Naive thymus-derived CD4-positive, alpha-beta T cell (primary cell): ENCODE measurements at regions of chr7 and their contacts with region 1.

Region 1: DNA sequence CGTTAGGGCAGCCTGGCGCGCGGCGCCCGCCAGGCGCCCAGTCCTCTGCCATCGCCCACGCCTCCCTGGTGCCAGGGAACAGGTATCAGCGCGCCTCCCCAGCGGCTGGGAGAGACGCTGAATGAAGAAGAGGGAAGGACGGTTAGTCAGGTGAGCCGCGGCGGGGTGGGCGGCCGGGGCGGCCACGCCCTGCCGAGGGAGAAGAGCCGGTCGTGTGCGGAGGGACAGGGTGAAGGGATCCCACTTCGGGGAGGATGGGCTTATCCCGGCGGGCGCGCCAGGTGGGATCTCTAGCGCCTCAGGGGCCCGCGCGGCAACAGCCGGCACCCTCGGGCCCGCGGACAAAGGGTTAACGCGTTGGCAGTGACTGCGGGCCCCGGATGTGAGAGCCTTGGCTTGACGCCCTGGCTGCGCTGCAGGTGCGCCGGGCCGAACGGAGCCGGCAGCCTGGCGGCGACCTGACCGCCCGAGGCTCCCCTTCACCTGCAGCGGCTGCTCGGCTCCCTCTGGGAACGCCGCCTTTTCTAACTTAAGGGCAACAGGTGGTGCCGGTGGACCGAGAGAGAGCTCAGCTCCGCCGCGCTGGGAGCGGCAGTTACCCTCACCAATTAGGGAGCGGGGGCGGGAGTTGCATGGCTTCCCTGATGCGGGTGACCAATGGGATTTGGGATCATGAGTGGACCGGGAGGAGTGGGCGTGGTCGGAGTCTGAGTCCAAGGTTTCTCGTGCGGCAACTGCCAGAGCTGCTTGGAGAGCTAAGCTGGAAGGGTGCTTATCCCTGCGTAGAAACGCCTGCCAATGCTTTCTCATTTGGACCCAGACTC is at the start of gene ARL4A:
- DNase-seq: peak; percentile 70 to 87 (median 85)
- ATAC-seq: peak; percentile 60
- H3K4me3 ChIP-seq: peak within 1 kb of the TSS; percentile 76
- H3K4me3 Mint-ChIP-seq: peak within 1 kb of the TSS; percentile 94 to 100 (median 96)
- H3K27ac ChIP-seq: peak within 1 kb of the TSS; percentile 95
- H3K27ac Mint-ChIP-seq: peak within 1 kb of the TSS; percentile 83 to 98 (median 96)
- H3K4me1 ChIP-seq: peaks cover 5 to 14% of the 10 kb centered on the region in 2 donors
- H3K4me1 Mint-ChIP-seq: peaks cover 7 to 35% (median 25%) of the 10 kb centered on the region in 7 donors
- H3K27me3 ChIP-seq: no peaks in the 10 kb centered on the region
- H3K27me3 Mint-ChIP-seq: no peaks in the 10 kb centered on the region
- total RNA-seq, gene ARL4A: 5.5 to 97.4 (median 11.6) TPM

Region 2: DNA sequence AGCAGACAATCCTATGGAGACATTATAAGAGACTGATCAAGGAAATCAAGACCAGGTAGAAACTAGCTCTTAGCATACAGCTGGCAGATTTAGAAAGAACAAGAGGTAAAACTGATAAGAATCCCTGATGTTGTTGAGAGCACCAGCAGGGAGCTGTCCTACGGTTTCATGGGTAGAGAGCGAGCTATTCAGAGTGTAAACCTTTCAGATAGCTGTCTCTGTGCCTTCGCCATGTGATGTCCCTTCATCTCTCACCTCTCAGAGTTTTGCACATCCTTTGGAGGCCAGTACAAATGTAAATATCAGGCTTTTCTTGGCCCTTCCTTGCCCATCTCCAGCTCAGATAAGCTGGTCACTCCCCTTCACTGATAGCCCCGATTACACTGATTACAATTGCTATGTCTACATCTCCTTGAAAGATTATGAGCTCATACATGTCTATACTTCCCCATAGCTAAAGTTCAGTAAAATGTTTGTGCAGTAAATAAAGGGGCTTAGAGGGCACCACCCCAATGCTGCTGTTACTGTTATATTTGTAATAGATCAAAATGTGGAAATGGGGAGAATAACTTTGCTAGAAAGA is 877.0 kb before region 1 on chr7:
- CTCF ChIA-PET with region 1: no interaction called
- POLR2A ChIA-PET with region 1: no interaction called
- intact Hi-C with region 1: no loop called
- DNase-seq: no peak
- ATAC-seq: peak; percentile 26
- H3K4me3 ChIP-seq: no peak overlapping the region
- H3K4me3 Mint-ChIP-seq: no peak overlapping the region
- H3K27ac ChIP-seq: no peak overlapping the region
- H3K27ac Mint-ChIP-seq: no peak overlapping the region
- H3K4me1 ChIP-seq: no peaks in the 10 kb centered on the region
- H3K4me1 Mint-ChIP-seq: no peaks in the 10 kb centered on the region
- H3K27me3 ChIP-seq: no peaks in the 10 kb centered on the region
- H3K27me3 Mint-ChIP-seq: no peaks in the 10 kb centered on the region

Region 3: GRCh38 chr7:12257582-12257981 is 429.5 kb before region 1 on chr7:
- CTCF ChIA-PET with region 1: no interaction called
- POLR2A ChIA-PET with region 1: no interaction called
- intact Hi-C with region 1: loop called in 1 of 2 experiments (anchors 1 kb)
- DNase-seq: peak in 8 of 9 donors; percentile 31 to 80 (median 72)
- ATAC-seq: peak; percentile 97
- H3K4me3 ChIP-seq: peak overlapping the region; percentile 26
- H3K4me3 Mint-ChIP-seq: no peak overlapping the region
- H3K27ac ChIP-seq: peak overlapping the region; percentile 28
- H3K27ac Mint-ChIP-seq: no peak overlapping the region
- H3K4me1 ChIP-seq: peaks cover 23% of the 10 kb centered on the region in 2 donors
- H3K4me1 Mint-ChIP-seq: peaks cover 0 to 12% (median 9%) of the 10 kb centered on the region in 7 donors
- H3K27me3 ChIP-seq: no peaks in the 10 kb centered on the region
- H3K27me3 Mint-ChIP-seq: peaks cover 0 to 3% (median 0%) of the 10 kb centered on the region in 5 donors

Region 4: DNA sequence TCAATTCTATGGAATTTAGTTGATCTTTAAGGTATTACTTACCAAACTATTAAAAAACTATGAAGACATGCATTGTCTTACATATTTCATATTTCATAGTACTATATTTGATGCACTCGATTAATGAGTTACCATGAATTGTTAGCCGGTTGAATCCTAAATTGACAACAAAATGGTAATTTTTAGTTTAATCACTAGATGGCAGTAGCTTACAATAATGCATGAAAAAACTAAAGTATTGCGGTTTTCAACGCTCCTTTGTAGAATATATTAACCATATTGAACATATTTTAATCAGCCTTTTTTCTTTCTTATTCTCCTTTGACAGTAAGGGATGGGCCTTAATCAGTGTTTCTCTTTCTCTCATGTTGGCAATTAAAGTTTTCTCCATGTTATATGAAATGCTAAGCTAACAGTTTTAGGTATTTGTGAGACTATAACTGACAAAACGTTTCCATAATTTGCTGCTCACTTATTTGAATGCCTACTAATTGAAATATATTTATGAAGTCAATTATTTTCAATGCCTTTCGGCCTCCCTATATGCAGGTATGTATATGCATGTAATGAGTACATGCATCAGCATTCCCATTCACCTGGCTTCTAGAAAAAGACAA is 48.1 kb before region 1 on chr7:
- CTCF ChIA-PET with region 1: interaction called, 8 read pairs
- POLR2A ChIA-PET with region 1: interaction called, 3 read pairs
- intact Hi-C with region 1: loop called (anchors 1 kb)
- DNase-seq: peak in 6 of 9 donors; percentile 26 to 62 (median 54)
- ATAC-seq: peak; percentile 71
- H3K4me3 ChIP-seq: no peak overlapping the region
- H3K4me3 Mint-ChIP-seq: peak overlapping the region in 1 of 10 donors; percentile 50
- H3K27ac ChIP-seq: no peak overlapping the region
- H3K27ac Mint-ChIP-seq: no peak overlapping the region
- H3K4me1 ChIP-seq: peaks cover 0 to 7% of the 10 kb centered on the region in 2 donors
- H3K4me1 Mint-ChIP-seq: peaks cover 11 to 31% (median 23%) of the 10 kb centered on the region in 7 donors
- H3K27me3 ChIP-seq: no peaks in the 10 kb centered on the region
- H3K27me3 Mint-ChIP-seq: peaks cover 0 to 10% (median 0%) of the 10 kb centered on the region in 5 donors

Region 5: DNA sequence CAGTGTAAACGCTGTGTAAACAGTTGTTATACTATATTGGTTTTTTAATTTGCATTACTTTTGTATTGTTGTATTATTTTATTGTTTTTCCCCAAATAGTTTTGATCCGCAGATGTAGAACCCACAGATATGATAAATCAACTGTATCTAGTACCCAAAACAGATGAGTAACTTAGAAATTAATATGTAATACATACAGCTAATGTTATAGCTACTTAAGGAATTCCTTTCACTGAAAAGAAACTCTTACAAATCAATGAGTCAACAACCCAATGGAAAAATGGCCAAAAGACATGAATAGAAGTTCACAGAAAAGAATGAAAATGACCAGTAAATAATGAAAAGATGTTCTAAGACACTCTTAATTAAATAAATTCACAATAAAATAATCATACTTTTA is 31.9 kb before region 1 on chr7:
- CTCF ChIA-PET with region 1: no interaction called
- POLR2A ChIA-PET with region 1: no interaction called
- intact Hi-C with region 1: no loop called
- DNase-seq: no peak
- ATAC-seq: no peak
- H3K4me3 ChIP-seq: no peak overlapping the region
- H3K4me3 Mint-ChIP-seq: no peak overlapping the region
- H3K27ac ChIP-seq: no peak overlapping the region
- H3K27ac Mint-ChIP-seq: no peak overlapping the region
- H3K4me1 ChIP-seq: no peaks in the 10 kb centered on the region
- H3K4me1 Mint-ChIP-seq: no peaks in the 10 kb centered on the region
- H3K27me3 ChIP-seq: no peaks in the 10 kb centered on the region
- H3K27me3 Mint-ChIP-seq: peaks cover 0 to 4% (median 0%) of the 10 kb centered on the region in 5 donors

Region 6: DNA sequence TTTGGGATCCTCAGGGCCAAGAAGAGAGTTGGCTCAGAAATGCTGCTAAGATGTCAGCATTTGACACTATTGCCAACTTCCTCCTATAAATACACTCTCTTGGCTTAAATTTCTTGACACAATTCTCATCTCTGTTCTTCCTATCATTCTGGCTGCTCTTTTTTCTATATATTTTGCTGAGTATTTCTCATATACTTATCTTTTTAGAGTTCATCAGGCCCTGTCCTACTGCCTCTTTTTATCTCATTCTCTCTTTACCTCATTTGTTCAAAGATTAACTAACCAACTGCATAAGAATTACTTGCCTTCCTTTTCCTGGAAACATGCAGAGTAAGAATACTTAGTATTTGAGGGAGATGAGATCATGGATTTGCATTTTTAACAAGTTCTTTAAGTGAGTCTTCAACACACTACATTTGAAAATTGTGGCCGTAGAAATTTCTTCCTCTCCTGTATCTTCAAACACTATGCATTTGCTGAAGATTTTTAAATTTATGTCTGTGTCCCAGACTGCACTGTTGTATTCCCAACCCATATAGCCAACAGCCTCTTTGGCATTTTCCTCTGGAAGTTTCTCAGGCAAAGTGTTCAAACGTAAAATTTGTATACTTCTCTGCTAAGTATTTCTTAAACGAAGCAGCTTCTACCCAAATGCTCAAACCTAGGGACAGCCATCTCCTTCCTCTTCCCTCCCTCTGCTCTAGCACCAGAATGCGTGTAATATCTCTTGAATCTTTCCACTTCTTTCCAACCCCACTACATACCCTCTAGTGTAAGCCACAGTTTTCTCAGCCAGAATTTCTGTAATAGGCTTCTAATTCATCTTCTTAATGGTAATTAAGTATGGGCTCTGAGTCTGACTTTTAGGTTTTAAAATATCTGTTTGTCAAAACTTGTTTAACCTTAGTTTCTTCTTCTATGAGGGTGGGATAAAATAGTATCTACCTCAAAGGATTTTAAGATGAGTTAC is 35.8 kb after region 1 on chr7:
- CTCF ChIA-PET with region 1: interaction called, 4 read pairs
- POLR2A ChIA-PET with region 1: no interaction called
- intact Hi-C with region 1: loop called in 1 of 2 experiments (anchors 2 kb)
- DNase-seq: no peak
- ATAC-seq: no peak
- H3K4me3 ChIP-seq: no peak overlapping the region
- H3K4me3 Mint-ChIP-seq: peak overlapping the region in 1 of 10 donors; percentile 51
- H3K27ac ChIP-seq: no peak overlapping the region
- H3K27ac Mint-ChIP-seq: peak overlapping the region in 2 of 9 donors; percentile 42 to 90
- H3K4me1 ChIP-seq: no peaks in the 10 kb centered on the region
- H3K4me1 Mint-ChIP-seq: peaks cover 0 to 39% (median 4%) of the 10 kb centered on the region in 7 donors
- H3K27me3 ChIP-seq: no peaks in the 10 kb centered on the region
- H3K27me3 Mint-ChIP-seq: peaks cover 0 to 2% (median 0%) of the 10 kb centered on the region in 5 donors

Region 7: DNA sequence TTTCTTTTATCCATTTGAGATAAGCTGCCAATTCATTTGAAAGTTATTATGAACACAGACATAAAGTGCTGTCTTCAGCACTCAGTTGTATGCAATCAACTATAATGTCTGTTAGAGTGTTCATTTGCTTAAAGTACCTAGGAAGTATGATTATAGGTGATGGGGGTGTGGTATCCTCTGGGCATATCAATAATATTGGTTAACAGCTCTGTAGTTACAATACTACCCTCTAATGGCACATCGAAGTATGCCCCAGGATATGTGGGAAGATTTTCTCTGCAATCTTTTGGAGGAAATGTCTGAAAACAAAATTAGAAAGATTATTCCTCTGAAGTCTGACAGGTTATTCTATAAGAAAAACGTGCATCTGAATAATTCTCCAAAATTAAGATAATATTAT is 430.0 kb after region 1 on chr7:
- CTCF ChIA-PET with region 1: no interaction called
- POLR2A ChIA-PET with region 1: no interaction called
- intact Hi-C with region 1: loop called (anchors 2 to 5 kb)
- DNase-seq: no peak
- ATAC-seq: no peak
- H3K4me3 ChIP-seq: no peak overlapping the region
- H3K4me3 Mint-ChIP-seq: no peak overlapping the region
- H3K27ac ChIP-seq: no peak overlapping the region
- H3K27ac Mint-ChIP-seq: no peak overlapping the region
- H3K4me1 ChIP-seq: no peaks in the 10 kb centered on the region
- H3K4me1 Mint-ChIP-seq: no peaks in the 10 kb centered on the region
- H3K27me3 ChIP-seq: no peaks in the 10 kb centered on the region
- H3K27me3 Mint-ChIP-seq: peaks cover 0 to 5% (median 3%) of the 10 kb centered on the region in 5 donors

Region 8: GRCh38 chr7:13742811-13743210 is 1055.7 kb after region 1 on chr7:
- CTCF ChIA-PET with region 1: no interaction called
- POLR2A ChIA-PET with region 1: no interaction called
- intact Hi-C with region 1: loop called in 1 of 2 experiments (anchors 5 kb)
- DNase-seq: no peak
- ATAC-seq: no peak
- H3K4me3 ChIP-seq: no peak overlapping the region
- H3K4me3 Mint-ChIP-seq: no peak overlapping the region
- H3K27ac ChIP-seq: no peak overlapping the region
- H3K27ac Mint-ChIP-seq: no peak overlapping the region
- H3K4me1 ChIP-seq: no peaks in the 10 kb centered on the region
- H3K4me1 Mint-ChIP-seq: no peaks in the 10 kb centered on the region
- H3K27me3 ChIP-seq: no peaks in the 10 kb centered on the region
- H3K27me3 Mint-ChIP-seq: peaks cover 0 to 3% (median 0%) of the 10 kb centered on the region in 5 donors